ENCODE measurements at regions of chr11 and their contacts with region 1.

Region 1: DNA sequence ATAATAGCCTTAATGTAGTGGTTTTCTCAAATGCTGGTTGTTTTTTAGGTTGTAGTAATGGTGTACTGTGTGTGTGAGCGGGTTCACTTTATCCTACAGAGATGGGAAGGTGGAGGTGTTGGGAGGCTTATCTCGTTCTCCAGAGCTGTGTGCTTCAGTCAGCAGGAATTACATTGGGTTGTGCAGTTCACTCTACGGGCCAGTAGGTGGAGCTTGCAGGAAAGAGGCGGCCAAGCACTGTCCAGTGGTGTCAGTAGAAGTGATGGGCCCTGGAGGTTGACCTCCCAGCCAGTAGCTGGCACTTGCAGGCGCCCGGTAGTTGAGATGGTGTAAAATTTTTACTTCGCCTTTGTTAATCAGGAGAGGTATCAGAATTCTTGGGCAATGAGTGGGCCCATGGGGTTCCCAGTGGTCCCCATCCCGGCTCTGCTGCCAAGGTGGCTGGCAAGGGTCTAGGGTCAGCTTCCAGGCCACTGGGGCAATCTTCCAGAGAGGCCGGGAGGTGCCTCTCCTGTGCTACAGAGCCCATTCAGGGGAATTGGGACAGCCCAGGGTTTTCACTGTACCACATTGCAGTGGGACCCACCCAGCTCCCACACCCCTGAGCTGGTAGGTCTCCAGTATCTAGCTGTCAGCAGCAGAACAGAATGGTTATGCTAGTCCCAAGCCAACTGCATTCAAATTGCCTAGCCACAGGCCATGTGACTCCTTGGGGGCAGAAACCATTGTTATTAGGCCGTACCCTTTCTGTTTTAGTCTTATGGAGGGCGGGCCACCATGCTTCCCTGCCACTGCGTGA is 43.9 kb downstream of the BIRC2 start:
- DNase-seq: peak; percentile 77
- ATAC-seq: peak; percentile 99
- H3K4me3 Mint-ChIP-seq: no peak overlapping the region
- H3K27ac Mint-ChIP-seq: no peak overlapping the region
- H3K4me1 Mint-ChIP-seq: peaks cover 2% of the 10 kb centered on the region; the same call in 1 of the 2 replicates
- H3K27me3 Mint-ChIP-seq: no peaks in the 10 kb centered on the region
- CTCF ChIP-seq: peak; percentile 86

Region 2: DNA sequence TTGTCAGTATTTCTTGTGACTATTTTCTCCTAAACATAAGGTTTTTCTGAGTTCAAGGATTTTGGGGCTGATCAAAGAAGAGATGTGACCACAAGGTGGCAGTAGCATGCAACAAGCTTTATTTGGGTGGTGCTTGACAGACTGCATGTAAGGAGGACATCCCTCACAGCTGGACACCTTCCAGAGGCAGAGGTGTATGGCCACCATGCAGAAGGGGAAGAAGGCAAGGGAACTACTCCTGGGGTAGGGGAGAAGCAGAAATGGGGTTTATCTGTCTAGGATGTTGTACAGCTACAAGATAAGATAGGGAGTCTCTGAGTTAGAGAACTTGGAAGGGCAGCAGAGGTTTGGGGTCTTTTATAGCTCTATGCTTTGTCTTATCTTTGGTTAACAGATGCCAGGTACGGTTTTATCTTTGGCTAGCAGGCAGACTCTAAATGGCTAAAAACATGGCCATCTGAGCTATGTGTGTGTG is 49.0 kb before region 1 on chr11:
- CTCF ChIA-PET with region 1: interaction called, 12 read pairs
- POLR2A ChIA-PET with region 1: no interaction called
- DNase-seq: peak; percentile 79
- ATAC-seq: peak; percentile 92
- H3K4me3 Mint-ChIP-seq: no peak overlapping the region
- H3K27ac Mint-ChIP-seq: no peak overlapping the region
- H3K4me1 Mint-ChIP-seq: peaks cover 14% of the 10 kb centered on the region
- H3K27me3 Mint-ChIP-seq: no peaks in the 10 kb centered on the region
- CTCF ChIP-seq: peak; percentile 66

Region 3: GRCh38 chr11:102375720-102376399 is 15.0 kb before region 1 on chr11:
- CTCF ChIA-PET with region 1: interaction called, 16 read pairs
- POLR2A ChIA-PET with region 1: no interaction called
- DNase-seq: no peak
- ATAC-seq: no peak
- H3K4me3 Mint-ChIP-seq: no peak overlapping the region
- H3K27ac Mint-ChIP-seq: no peak overlapping the region
- H3K4me1 Mint-ChIP-seq: peaks cover 13% of the 10 kb centered on the region
- H3K27me3 Mint-ChIP-seq: no peaks in the 10 kb centered on the region
- CTCF ChIP-seq: no peak

Region 4: GRCh38 chr11:102407901-102408300 is 17.0 kb after region 1 on chr11:
- CTCF ChIA-PET with region 1: interaction called, 26 read pairs
- POLR2A ChIA-PET with region 1: no interaction called
- DNase-seq: no peak
- ATAC-seq: no peak
- H3K4me3 Mint-ChIP-seq: no peak overlapping the region
- H3K27ac Mint-ChIP-seq: no peak overlapping the region
- H3K4me1 Mint-ChIP-seq: peaks cover 10% of the 10 kb centered on the region
- H3K27me3 Mint-ChIP-seq: no peaks in the 10 kb centered on the region
- CTCF ChIP-seq: no peak

Region 5: GRCh38 chr11:102495161-102496042 is 104.5 kb after region 1 on chr11:
- CTCF ChIA-PET with region 1: interaction called, 19 read pairs
- POLR2A ChIA-PET with region 1: no interaction called
- DNase-seq: peak; percentile 44
- ATAC-seq: peak; percentile 94
- H3K4me3 Mint-ChIP-seq: peak overlapping the region; percentile 33; the same call in 1 of the 2 replicates
- H3K27ac Mint-ChIP-seq: peak overlapping the region; percentile 65; the same call in 1 of the 2 replicates
- H3K4me1 Mint-ChIP-seq: peaks cover 6% of the 10 kb centered on the region
- H3K27me3 Mint-ChIP-seq: no peaks in the 10 kb centered on the region
- CTCF ChIP-seq: peak; percentile 48

Region 6: DNA sequence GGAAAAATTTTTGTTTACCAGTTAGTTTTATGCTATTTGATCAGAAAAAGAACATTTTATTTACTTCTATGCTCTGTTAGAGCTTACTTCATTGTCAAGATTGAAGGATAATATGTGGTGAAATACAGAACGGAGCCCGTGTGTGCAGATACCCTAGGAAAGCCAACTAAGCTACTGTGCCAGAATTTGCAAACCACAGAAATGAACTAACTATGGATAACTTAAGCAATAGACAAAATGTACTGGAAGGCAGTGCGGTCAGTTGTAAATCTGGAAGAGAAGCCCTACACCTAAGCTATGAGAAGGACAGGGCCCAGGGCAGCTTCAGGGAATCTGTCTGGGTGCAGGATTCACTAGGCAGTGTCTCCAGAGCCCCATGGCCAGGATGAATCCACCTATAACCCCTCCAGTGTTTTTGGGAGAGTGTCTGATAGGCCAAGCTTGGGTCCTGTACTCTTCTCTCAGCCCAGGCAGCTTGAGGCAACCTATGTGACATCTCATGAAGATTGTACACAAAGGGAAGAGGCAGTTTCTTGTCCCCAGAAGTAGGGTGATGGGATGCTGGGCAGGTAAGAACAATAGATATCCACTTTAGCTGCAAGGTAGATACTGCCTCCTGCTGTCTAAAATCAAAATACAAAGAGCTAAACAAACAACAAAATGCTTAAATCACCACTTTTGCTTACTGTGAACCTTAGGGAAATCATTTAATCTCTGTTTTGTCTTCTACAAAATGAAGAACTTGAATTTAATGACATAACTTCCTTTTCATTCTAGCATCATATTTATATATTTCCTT is 127.6 kb after region 1 on chr11:
- CTCF ChIA-PET with region 1: interaction called, 18 read pairs
- POLR2A ChIA-PET with region 1: no interaction called
- DNase-seq: no peak
- ATAC-seq: peak; percentile 65
- H3K4me3 Mint-ChIP-seq: no peak overlapping the region
- H3K27ac Mint-ChIP-seq: no peak overlapping the region
- H3K4me1 Mint-ChIP-seq: no peaks in the 10 kb centered on the region
- H3K27me3 Mint-ChIP-seq: peaks cover 4% of the 10 kb centered on the region
- CTCF ChIP-seq: no peak

Measured in WTC11 (cell line).